A549 (cell line): ENCODE measurements at regions of chr11 and their contacts with region 1.

Region 1: GRCh38 chr11:64304316-64305072 is 830 bp upstream of the ESRRA start:
- DNase-seq: peak; percentile 94 to 96
- ATAC-seq: peak; percentile 59 to 80
- H3K4me3 ChIP-seq: peak overlapping the region; percentile 53
- H3K27ac ChIP-seq: peak overlapping the region; percentile 79 to 92
- H3K4me1 ChIP-seq: peaks cover 20% of the 10 kb centered on the region
- CTCF ChIP-seq: peak; percentile 88
- EP300 ChIP-seq: no peak
- POLR2A ChIP-seq: peak; percentile 42; the same call in 1 of the 2 replicates
- RAD21 ChIP-seq: peak; percentile 53 to 56

Region 2: GRCh38 chr11:64185816-64186498 is 118.5 kb before region 1 on chr11 and contains the start of gene STIP1:
- CTCF ChIA-PET with region 1: interaction called, 10 read pairs
- POLR2A ChIA-PET with region 1: interaction called, 7 read pairs
- DNase-seq: peak; percentile 99 to 100
- ATAC-seq: peak; percentile 84 to 93
- H3K4me3 ChIP-seq: peak within 1 kb of the TSS; percentile 52
- H3K27ac ChIP-seq: peak within 1 kb of the TSS; percentile 79 to 96
- H3K4me1 ChIP-seq: peaks cover 26% of the 10 kb centered on the region
- CTCF ChIP-seq: no peak
- EP300 ChIP-seq: no peak
- POLR2A ChIP-seq: peak; percentile 79
- RAD21 ChIP-seq: no peak
- polyA plus RNA-seq, gene STIP1: 288 and 300 TPM in 2 replicates

Region 3: DNA sequence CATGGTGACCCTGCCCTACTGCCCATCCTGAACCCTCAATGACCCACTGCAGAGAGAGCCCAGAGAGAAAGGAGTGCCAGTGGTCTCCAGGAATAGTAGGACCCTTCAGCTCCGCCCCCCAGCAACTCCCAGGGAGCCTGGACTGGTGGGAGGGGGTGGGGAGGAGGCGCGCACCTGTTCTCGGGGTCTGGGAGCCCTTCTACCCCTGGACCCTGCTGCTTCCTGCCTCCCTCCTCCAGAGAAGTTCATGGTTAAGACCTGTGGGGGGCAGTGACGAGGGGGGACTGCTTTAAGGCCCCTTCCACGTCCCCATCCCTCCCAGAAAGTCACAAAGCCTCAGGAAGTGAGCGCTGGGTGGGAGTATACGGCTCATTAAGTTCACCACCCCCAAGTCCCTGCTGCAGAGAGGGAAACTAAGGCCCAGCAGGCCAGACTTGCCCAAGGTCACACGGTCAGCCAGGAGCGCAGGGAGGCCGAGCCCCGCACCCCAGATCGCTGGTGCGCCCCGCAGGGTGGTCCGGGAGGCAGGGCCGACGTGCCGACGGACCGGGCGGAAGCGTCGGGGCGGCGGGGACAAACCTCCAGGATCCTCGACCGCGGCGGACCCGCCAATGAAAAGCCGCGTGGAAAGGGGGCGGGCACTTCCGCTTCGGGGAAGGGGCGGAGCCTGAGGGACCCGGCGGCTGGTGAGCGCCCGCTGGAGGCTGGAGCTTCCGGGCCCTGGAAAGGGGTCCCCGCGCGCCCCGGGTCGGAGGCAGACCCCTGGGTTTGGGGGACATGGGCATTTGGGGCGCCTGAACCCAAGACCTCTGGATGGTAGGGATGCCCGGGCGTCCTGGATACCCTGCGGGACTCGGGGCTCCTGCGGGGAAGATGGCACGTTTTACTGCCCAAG is 78.6 kb before region 1 on chr11 and contains the starts of genes NUDT22 and TRPT1:
- CTCF ChIA-PET with region 1: interaction called, 41 read pairs
- POLR2A ChIA-PET with region 1: interaction called, 3 read pairs
- DNase-seq: peak; percentile 80 to 90
- ATAC-seq: peak; percentile 77 to 83
- H3K4me3 ChIP-seq: peak within 1 kb of the TSS; percentile 97
- H3K27ac ChIP-seq: peak within 1 kb of the TSS; percentile 93 to 99
- H3K4me1 ChIP-seq: peaks cover 30% of the 10 kb centered on the region
- CTCF ChIP-seq: peak; percentile 28; the same call in 2 of the 3 replicates
- EP300 ChIP-seq: no peak
- POLR2A ChIP-seq: peak; percentile 67
- RAD21 ChIP-seq: 0 out of 5 replicates have a peak, but pooled peaks of 1 of the 2 experiments have one; percentile 14
- polyA plus RNA-seq, gene NUDT22: 21.5 and 21.7 TPM in 2 replicates
- polyA plus RNA-seq, gene TRPT1: 18.6 and 25.2 TPM in 2 replicates

Region 4: GRCh38 chr11:64240394-64241174 is 63.9 kb before region 1 on chr11 and contains the start of gene FKBP2:
- CTCF ChIA-PET with region 1: interaction called, 206 read pairs
- POLR2A ChIA-PET with region 1: interaction called, 10 read pairs
- DNase-seq: peak; percentile 94 to 98
- ATAC-seq: peak; percentile 41 to 64
- H3K4me3 ChIP-seq: peak within 1 kb of the TSS; percentile 73
- H3K27ac ChIP-seq: peak within 1 kb of the TSS; percentile 91 to 98
- H3K4me1 ChIP-seq: peaks cover 44% of the 10 kb centered on the region
- CTCF ChIP-seq: no peak
- EP300 ChIP-seq: no peak
- POLR2A ChIP-seq: peak; percentile 66
- RAD21 ChIP-seq: no peak
- polyA plus RNA-seq, gene FKBP2: 40.5 and 41.4 TPM in 2 replicates

Region 5: DNA sequence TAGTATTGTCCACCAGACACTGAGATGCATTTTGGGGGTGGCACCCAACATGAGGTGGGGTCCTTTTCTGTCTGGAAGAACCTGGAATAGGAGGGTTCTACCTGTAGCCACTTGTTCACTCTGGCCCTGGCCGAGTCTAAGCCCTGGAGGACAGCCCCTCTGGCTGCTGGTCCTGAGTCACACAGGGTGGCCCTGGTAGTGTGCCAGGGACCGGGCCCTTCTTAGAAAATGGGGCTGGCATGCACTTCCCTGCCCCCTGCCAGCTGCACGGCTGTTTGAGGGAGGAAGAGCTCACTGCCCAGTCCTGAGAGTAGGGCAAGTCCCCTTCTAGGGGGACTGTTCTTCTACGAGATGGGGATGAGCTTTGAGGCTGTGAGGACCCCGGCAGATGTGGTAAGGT is 51.0 kb before region 1 on chr11:
- CTCF ChIA-PET with region 1: interaction called, 206 read pairs
- POLR2A ChIA-PET with region 1: no interaction called
- DNase-seq: no peak
- ATAC-seq: no peak
- H3K4me3 ChIP-seq: no peak overlapping the region
- H3K27ac ChIP-seq: no peak overlapping the region
- H3K4me1 ChIP-seq: peaks cover 24% of the 10 kb centered on the region
- CTCF ChIP-seq: no peak
- EP300 ChIP-seq: no peak
- POLR2A ChIP-seq: no peak
- RAD21 ChIP-seq: no peak

Region 6: DNA sequence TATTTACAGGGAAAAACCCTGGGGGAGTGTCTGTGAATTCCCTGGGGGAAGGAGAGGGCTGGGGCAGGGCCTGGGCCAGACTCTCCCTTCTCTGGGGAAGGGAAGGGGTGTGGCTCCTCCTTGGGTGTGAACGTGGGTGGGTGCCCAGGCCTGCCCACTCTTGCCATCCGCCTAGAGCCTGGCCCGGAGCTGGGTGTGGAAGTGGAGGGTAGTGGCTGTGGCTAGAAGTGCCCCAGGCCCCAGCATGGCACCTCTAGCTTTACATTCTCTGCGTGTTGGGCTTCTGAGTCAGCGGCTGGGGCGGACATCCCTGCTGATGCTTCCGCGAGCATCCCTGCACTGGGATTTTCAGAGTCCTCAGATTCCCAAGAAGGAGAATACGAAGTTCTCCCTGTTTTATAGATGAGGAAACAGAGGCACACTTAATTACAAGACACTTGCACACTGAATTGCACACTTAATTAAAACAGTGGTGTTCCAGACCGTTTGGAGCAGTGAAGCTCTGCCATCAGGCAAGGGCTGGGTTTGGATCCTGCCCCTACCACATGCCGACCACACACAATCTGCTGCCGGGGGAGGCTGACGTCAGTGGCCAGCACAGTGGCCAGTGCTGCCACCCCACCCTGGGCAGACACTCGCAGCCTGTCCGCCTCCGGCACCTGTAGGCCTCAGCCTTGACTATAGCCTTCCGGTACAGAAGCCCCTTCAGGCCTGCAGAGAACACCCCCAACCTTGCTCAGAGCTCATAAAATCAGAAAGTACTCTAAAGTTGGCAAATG is 27.7 kb before region 1 on chr11:
- CTCF ChIA-PET with region 1: interaction called, 448 read pairs
- POLR2A ChIA-PET with region 1: interaction called, 34 read pairs
- DNase-seq: peak; percentile 44 to 81
- ATAC-seq: peak; percentile 88 to 91
- H3K4me3 ChIP-seq: no peak overlapping the region
- H3K27ac ChIP-seq: peak overlapping the region; percentile 65 to 84
- H3K4me1 ChIP-seq: peaks cover 40% of the 10 kb centered on the region
- CTCF ChIP-seq: no peak
- EP300 ChIP-seq: no peak
- POLR2A ChIP-seq: no peak
- RAD21 ChIP-seq: no peak

Region 7: GRCh38 chr11:64317957-64318693 is 13.6 kb after region 1 on chr11 and contains the start of gene PRDX5:
- CTCF ChIA-PET with region 1: interaction called, 68 read pairs
- POLR2A ChIA-PET with region 1: interaction called, 30 read pairs
- DNase-seq: peak; percentile 91 to 98
- ATAC-seq: peak; percentile 75 to 87
- H3K4me3 ChIP-seq: peak within 1 kb of the TSS; percentile 80
- H3K27ac ChIP-seq: peak within 1 kb of the TSS; percentile 97 to 98
- H3K4me1 ChIP-seq: peaks cover 14% of the 10 kb centered on the region
- CTCF ChIP-seq: peak; percentile 60
- EP300 ChIP-seq: no peak
- POLR2A ChIP-seq: peak; percentile 79
- RAD21 ChIP-seq: peak; percentile 69 to 81
- polyA plus RNA-seq, gene PRDX5: 305 and 377 TPM in 2 replicates

Region 8: DNA sequence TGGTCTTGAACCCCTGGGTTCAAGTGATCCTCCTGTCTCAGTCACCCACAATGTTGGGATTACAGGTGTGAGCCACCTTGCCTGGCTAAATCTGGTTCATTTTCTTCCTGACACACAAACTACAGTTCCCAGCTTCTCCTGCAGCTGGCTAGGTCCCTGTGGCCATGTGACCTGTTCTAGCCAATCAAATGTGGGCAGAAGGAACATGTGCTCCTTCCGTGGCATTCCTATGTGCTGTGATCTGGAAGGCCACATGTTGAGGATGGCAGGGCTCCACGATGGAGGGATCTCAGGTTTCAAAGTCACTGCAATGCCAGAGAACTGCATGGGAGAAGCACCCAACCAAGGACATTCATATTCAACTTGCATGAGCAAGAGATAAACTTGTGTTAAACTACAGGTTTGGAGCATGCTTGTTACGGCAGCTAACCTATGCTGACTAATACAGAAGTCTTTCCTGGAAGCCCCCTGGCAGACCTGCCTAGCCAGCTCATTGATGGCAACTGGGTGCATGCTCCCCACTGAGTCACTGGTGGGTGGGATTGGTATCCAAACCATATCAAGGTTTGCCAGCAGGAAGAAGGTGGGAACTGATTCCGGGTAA is 140.4 kb after region 1 on chr11:
- CTCF ChIA-PET with region 1: no interaction called
- POLR2A ChIA-PET with region 1: no interaction called
- DNase-seq: peak; percentile 45 to 61
- ATAC-seq: no peak
- H3K4me3 ChIP-seq: no peak overlapping the region
- H3K27ac ChIP-seq: no peak overlapping the region
- H3K4me1 ChIP-seq: peaks cover 10% of the 10 kb centered on the region; the same call in 2 of the 3 replicates
- CTCF ChIP-seq: no peak
- EP300 ChIP-seq: no peak
- POLR2A ChIP-seq: no peak
- RAD21 ChIP-seq: no peak